ENCODE measurements at regions of chr10 and their contacts with region 1.

Region 1: DNA sequence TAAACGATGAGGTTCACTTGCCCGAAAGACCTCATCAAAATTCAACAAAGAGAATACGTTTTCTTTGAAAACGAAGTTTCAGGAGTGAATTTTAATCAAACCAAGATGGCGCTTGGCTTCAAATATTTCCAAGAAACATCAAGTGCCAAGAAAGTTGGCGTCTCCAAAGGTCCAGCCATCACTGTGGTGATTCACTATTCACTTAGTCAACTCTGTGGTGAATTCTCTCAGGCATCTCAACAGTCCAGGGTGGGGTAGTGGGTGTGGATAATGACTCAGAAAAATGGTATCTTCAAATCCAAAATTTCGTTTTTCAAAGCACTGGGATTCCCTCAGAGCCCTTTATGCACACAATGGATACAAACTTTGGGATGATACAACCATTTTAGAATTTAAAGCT is 133.1 kb downstream of the SVIL start:
- DNase-seq: no peak
- H3K4me3 ChIP-seq: no peak overlapping the region
- CTCF ChIP-seq: no peak

Region 2: DNA sequence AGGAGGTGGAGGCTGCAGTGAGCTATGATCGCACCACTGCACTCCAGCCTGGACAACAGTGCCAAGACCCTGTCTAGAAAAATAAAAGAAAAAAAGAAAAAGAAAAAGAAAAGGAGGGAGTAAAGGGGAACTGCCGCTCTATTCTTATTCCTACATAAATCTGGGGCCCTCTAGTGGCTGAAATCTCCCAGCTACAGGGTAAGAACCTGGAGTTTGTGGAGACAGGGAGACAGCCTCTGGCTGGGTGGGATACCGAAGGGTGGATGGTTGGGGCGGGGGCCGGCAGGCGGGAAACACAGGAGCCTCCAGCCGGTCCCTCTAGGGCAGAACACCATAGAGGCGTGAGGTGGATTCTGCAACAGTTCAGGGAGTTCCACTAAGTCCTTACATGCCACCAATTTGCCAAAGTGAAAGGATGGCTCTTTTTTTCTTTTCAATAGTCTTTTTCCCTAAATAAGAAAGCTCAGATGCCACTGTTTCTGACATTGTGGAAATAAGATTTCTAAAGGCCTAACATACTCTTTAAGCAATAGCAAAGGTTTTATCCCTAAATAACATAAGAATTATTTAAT is 15.7 kb after region 1 on chr10:
- CTCF ChIA-PET with region 1: interaction called, 65 read pairs
- POLR2A ChIA-PET with region 1: no interaction called
- DNase-seq: no peak
- H3K4me3 ChIP-seq: no peak overlapping the region
- CTCF ChIP-seq: peak; percentile 52

Region 3: DNA sequence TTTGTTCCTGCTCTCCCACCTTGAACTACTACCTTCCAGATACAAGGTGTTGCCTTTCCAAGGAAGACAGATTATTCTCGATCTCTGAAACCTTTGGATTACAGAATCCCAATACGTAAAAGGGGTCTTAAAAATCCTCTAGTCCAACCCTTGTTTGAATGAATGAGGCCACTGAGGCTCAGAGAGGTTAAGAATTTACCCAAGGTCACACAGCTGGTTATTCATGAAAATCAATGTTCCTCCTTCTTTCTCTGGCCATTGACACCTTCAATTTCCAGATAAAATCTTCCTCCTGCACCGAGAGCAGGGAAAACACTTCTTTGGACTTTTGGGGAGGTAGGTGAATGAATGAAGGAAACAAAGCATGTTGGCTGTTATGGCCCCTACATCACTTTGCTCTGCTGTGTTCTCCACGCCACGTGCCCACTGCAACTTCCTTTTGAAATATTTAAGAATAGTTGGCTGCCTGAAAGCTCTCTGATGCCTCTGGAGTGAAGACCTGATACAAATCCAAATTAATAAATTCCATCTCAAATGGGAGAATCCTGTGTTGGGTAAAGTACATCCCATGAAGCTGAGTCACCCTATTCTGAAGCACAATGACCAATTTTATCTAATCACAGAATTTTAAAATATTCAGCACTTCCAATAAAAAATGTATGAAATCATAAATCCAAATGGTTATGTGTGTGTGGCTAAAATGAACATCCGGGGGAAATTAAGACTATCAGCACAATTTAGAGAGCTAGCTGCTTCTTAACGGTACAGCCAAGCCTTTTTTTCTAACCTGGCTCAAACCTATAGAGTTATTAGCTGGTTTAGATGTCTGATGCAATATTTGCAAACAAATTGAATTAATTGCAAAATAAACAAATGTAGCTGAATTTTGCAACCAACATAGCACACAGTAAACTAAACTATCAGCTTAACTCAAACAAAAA is 125.8 kb after region 1 on chr10:
- CTCF ChIA-PET with region 1: no interaction called
- POLR2A ChIA-PET with region 1: no interaction called
- DNase-seq: no peak
- H3K4me3 ChIP-seq: no peak overlapping the region
- CTCF ChIP-seq: no peak

Measured in AG04449 (cell line).